Panc1 (cell line): ENCODE measurements at regions of chr17 and their contacts with region 1.

Region 1: GRCh38 chr17:74961657-74962490 is 10.7 kb downstream of the HID1 start:
- DNase-seq: no peak
- ATAC-seq: peak; percentile 82
- H3K4me3 ChIP-seq: no peak overlapping the region
- H3K27ac ChIP-seq: no peak overlapping the region
- H3K4me1 ChIP-seq: peaks cover 3% of the 10 kb centered on the region; the same call in 1 of the 2 replicates
- H3K27me3 ChIP-seq: no peaks in the 10 kb centered on the region
- CTCF ChIP-seq: peak; percentile 81

Region 2: GRCh38 chr17:74646231-74646630 is 315.6 kb before region 1 on chr17:
- CTCF ChIA-PET with region 1: no interaction called
- POLR2A ChIA-PET with region 1: no interaction called
- in situ Hi-C with region 1: no loop called
- intact Hi-C with region 1: no loop called
- DNase-seq: peak; percentile 12
- ATAC-seq: peak; percentile 74
- H3K4me3 ChIP-seq: no peak overlapping the region
- H3K27ac ChIP-seq: no peak overlapping the region
- H3K4me1 ChIP-seq: no peaks in the 10 kb centered on the region
- H3K27me3 ChIP-seq: peaks cover 39% of the 10 kb centered on the region
- CTCF ChIP-seq: peak; percentile 66; the same call in 1 of the 2 replicates

Region 3: GRCh38 chr17:74790161-74791054 is 171.5 kb before region 1 on chr17:
- CTCF ChIA-PET with region 1: interaction called, 16 read pairs
- POLR2A ChIA-PET with region 1: no interaction called
- in situ Hi-C with region 1: no loop called
- intact Hi-C with region 1: loop called (anchors 1 kb)
- DNase-seq: no peak
- ATAC-seq: no peak
- H3K4me3 ChIP-seq: no peak overlapping the region
- H3K27ac ChIP-seq: no peak overlapping the region
- H3K4me1 ChIP-seq: no peaks in the 10 kb centered on the region
- H3K27me3 ChIP-seq: no peaks in the 10 kb centered on the region
- CTCF ChIP-seq: no peak

Region 4: DNA sequence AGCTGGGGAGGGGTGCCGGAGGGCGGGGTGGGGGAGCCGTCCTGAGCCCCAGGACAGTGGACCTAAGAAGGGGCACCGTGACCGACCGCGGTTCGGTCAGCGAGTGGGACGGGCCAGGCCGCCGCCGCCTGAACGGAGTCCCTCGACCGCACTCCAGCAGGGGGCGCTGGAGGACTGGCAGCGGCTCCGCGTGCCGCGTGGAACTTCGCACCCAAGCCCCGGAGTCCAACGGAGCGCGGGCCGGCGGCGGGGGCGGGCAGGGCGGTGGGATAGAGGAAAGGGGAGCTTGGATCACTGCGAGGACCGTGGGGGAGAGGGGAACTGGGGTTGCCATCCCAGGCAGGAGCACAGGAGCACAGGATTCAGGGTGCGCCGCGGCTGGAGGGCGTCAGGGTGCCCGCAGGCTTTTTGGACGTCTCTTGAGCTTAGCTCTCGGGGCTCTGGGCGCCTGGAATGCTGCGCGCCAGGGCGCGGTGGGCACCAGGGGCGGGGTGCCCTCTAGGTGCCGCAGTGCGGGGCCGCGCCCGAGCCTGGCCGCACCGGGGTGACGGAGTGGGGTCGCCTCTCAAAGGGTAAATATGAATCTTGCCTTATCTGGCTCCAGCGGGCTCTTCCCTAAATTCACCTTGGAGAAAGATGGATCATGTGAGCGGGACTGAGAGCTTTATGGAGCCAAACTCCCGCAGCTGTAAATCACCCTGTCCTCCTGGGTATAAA is 38.2 kb before region 1 on chr17:
- CTCF ChIA-PET with region 1: interaction called, 41 read pairs
- POLR2A ChIA-PET with region 1: no interaction called
- in situ Hi-C with region 1: no loop called
- intact Hi-C with region 1: loop called (anchors 1 kb)
- DNase-seq: no peak
- ATAC-seq: peak; percentile 78
- H3K4me3 ChIP-seq: peak overlapping the region; percentile 27 to 50
- H3K27ac ChIP-seq: no peak overlapping the region
- H3K4me1 ChIP-seq: peaks cover 4% of the 10 kb centered on the region; the same call in 1 of the 2 replicates
- H3K27me3 ChIP-seq: peaks cover 18% of the 10 kb centered on the region
- CTCF ChIP-seq: peak; percentile 99

Region 5: GRCh38 chr17:74972107-74972972 is 10.5 kb after region 1 on chr17 and contains the start of gene HID1:
- CTCF ChIA-PET with region 1: interaction called, 10 read pairs
- POLR2A ChIA-PET with region 1: no interaction called
- in situ Hi-C with region 1: no loop called
- intact Hi-C with region 1: no loop called
- DNase-seq: no peak
- ATAC-seq: peak; percentile 87
- H3K4me3 ChIP-seq: peak within 1 kb of the TSS; percentile 52 to 58
- H3K27ac ChIP-seq: no peak within 1 kb of the TSS
- H3K4me1 ChIP-seq: peaks cover 4% of the 10 kb centered on the region; the same call in 1 of the 2 replicates
- H3K27me3 ChIP-seq: no peaks in the 10 kb centered on the region
- CTCF ChIP-seq: no peak
- total RNA-seq, gene HID1: 10.9 TPM

Region 6: DNA sequence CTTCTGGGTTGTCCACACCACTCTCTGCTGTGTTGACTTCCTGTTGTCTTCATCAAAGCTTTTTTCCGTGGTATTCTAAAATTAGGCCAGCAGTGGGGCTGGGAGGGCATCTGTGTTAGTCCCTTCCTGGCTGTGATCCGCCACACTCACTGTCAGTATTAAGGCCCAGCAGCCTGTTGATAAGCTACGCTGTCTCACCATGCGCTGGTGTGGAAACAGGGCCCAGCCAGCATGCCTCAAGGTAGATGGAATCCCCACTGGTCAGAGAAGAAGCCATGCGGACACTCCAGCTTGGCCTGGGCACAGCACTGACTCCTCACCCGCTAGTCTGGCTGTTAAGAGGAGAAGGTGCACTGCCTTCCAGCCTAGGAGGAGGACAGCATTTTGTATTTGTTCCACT is 36.9 kb after region 1 on chr17:
- CTCF ChIA-PET with region 1: interaction called, 11 read pairs
- POLR2A ChIA-PET with region 1: no interaction called
- in situ Hi-C with region 1: no loop called
- intact Hi-C with region 1: no loop called
- DNase-seq: no peak
- ATAC-seq: no peak
- H3K4me3 ChIP-seq: no peak overlapping the region
- H3K27ac ChIP-seq: no peak overlapping the region
- H3K4me1 ChIP-seq: no peaks in the 10 kb centered on the region
- H3K27me3 ChIP-seq: no peaks in the 10 kb centered on the region
- CTCF ChIP-seq: no peak

Region 7: DNA sequence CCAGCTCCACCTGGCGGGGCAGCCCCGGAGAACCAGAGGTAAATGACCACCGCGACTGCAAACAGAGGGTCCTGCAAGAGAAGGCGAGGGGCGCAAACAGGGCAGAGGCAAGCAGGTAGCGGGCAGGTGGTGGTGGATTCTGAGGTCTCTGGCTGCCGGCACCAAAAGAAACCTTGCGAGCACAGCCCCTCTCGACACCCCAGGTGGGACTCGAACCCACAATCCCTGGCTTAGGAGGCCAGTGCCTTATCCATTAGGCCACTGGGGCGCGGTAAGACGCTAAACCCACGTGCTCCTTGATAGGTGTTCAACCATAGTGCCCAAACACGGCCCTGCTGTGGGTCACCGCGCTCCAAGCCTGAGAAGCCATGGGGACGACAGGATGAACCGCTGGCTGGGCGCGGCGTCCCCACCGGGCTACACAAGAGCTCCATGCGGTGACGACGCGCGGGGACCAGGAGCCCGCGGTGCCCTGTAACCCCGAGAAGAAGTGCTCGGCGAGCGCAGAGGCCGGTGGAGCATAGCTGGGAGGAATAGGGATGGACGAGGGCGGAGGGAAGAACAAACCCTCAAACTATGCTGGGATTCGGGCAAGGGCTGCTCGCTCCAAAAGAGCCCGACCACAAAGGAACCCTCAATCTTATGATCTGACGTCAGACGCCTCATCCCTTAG is 72.5 kb after region 1 on chr17:
- CTCF ChIA-PET with region 1: interaction called, 29 read pairs
- POLR2A ChIA-PET with region 1: no interaction called
- in situ Hi-C with region 1: no loop called
- intact Hi-C with region 1: loop called (anchors 2 kb)
- DNase-seq: peak; percentile 84
- ATAC-seq: peak; percentile 76
- H3K4me3 ChIP-seq: peak overlapping the region; percentile 66 to 88
- H3K27ac ChIP-seq: peak overlapping the region; percentile 93
- H3K4me1 ChIP-seq: peaks cover 10% of the 10 kb centered on the region; the same call in 1 of the 2 replicates
- H3K27me3 ChIP-seq: no peaks in the 10 kb centered on the region
- CTCF ChIP-seq: no peak